Left cardiac atrium (tissue), 4 donors: ENCODE measurements at regions of chr17 and their contacts with region 1.

Region 1: GRCh38 chr17:16521070-16521727 is 29.2 kb upstream of the LRRC75A start:
- DNase-seq: peak; percentile 71
- ATAC-seq: peak; percentile 88 to 94

Region 2: GRCh38 chr17:16363749-16364536 is 157.3 kb before region 1 on chr17:
- intact Hi-C with region 1: loop called in 1 of 2 experiments (anchors 5 kb)
- DNase-seq: peak; percentile 79
- ATAC-seq: peak; percentile 89 to 90

Region 3: GRCh38 chr17:16453493-16453851 is 67.7 kb before region 1 on chr17:
- intact Hi-C with region 1: loop called (anchors 1 to 2 kb)
- DNase-seq: no peak
- ATAC-seq: no peak